ENCODE measurements at regions of chr11 and their contacts with region 1.

Region 1: DNA sequence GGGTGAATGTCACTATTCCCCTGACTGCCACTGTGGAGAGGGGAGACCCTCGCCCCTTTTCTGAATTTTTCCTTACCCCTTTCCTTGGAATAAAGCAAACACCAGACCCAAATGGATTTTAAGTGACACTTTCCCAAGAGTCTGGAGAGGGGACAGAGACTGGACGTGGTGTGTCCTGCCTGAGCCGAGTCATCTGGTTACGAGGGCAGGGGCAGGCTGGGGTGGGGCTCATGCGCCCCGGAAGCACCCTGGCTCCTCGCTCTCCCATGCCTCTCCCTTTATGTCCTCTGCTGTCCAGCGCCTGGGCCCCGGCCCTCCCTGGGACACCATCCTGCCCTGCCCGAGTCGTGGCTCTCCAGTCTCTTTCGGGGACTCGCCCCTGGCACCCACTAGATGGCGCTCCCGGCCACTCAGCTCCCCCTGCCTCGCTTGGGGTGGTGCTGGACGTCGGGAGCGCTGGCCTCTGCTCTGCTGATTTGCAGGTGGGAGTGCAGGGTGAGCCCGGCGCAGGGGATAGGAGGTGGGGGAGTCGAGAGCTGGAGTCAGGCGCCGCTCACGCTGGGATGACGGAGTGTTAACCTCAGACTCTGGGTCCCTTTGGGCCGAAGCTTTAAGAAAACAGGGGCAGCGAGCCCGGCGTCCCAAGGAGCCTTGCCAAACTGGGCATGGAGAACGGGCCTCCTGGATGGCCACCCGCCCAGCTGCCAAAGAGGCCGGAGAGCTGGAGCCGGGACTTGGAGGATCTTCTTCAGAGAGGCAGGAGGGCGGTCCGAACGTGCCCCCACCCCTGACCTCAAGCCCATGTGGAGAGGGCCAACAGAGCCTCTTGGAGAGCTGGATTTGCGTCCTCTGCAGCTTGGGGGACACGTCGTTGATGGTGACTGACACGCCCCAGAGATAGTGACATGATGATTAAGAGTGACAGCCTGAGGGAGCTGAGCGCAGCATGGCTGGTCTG is 89.9 kb downstream of the RPS6KA4 start:
- DNase-seq: peak; percentile 82
- ATAC-seq: peak; percentile 80
- H3K4me3 Mint-ChIP-seq: peak overlapping the region; percentile 61
- H3K27ac Mint-ChIP-seq: no peak overlapping the region
- H3K4me1 Mint-ChIP-seq: peaks cover 9% of the 10 kb centered on the region
- H3K27me3 Mint-ChIP-seq: peaks cover 7% of the 10 kb centered on the region
- CTCF ChIP-seq: peak; percentile 81

Region 2: DNA sequence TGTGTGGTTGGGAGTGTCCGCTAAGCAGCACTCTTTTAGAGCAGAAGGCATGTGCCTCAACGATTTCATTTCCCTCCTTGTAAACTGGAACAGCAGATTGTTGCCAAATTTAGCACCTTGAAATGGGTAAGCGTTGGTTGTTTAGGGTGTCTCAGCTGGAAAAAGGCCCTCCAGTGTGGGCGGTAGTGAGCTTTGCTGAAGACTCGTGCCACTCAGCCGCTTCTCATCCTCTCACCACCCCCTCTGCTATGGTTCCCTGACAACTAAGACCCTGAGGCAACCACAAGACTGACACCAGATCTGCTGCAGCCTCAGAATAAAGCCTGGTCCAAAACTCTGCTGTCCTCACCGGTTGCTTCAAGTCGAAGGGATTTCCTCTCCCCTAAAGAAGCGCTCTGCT is 252.3 kb before region 1 on chr11:
- CTCF ChIA-PET with region 1: no interaction called
- POLR2A ChIA-PET with region 1: no interaction called
- intact Hi-C with region 1: no loop called
- DNase-seq: no peak
- ATAC-seq: no peak
- H3K4me3 Mint-ChIP-seq: no peak overlapping the region
- H3K27ac Mint-ChIP-seq: peak overlapping the region; percentile 40
- H3K4me1 Mint-ChIP-seq: peaks cover 21% of the 10 kb centered on the region
- H3K27me3 Mint-ChIP-seq: no peaks in the 10 kb centered on the region
- CTCF ChIP-seq: no peak

Region 3: GRCh38 chr11:64269380-64270234 is 179.3 kb before region 1 on chr11:
- CTCF ChIA-PET with region 1: no interaction called
- POLR2A ChIA-PET with region 1: no interaction called
- intact Hi-C with region 1: no loop called
- DNase-seq: peak; percentile 98
- ATAC-seq: peak; percentile 73
- H3K4me3 Mint-ChIP-seq: peak overlapping the region; percentile 96
- H3K27ac Mint-ChIP-seq: peak overlapping the region; percentile 95
- H3K4me1 Mint-ChIP-seq: peaks cover 21% of the 10 kb centered on the region
- H3K27me3 Mint-ChIP-seq: no peaks in the 10 kb centered on the region
- CTCF ChIP-seq: no peak

Region 4: GRCh38 chr11:64390558-64390957 is 58.3 kb before region 1 on chr11:
- CTCF ChIA-PET with region 1: interaction called, 16 read pairs
- POLR2A ChIA-PET with region 1: no interaction called
- intact Hi-C with region 1: no loop called
- DNase-seq: no peak
- ATAC-seq: peak; percentile 11
- H3K4me3 Mint-ChIP-seq: no peak overlapping the region
- H3K27ac Mint-ChIP-seq: no peak overlapping the region
- H3K4me1 Mint-ChIP-seq: peaks cover 33% of the 10 kb centered on the region
- H3K27me3 Mint-ChIP-seq: no peaks in the 10 kb centered on the region
- CTCF ChIP-seq: no peak

Region 5: DNA sequence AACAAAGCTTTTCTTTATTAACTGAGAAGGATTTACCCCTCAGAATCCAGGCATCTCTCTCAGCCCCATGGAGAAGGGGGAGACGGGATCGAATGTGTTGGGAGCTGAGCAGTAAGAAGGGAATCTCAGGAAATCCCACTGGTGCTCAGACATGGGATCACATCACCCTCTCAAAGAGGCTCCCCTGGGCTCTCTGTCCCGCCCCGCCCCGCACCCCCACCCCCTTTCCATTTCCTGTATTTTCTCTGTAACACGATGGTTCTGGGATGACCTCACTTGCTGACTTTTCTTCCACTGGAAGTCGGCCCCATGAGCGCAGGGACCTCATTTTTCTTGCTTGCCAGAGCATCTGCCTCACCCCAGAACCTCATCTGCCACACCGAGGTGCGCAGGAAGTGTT is 10.1 kb after region 1 on chr11:
- CTCF ChIA-PET with region 1: interaction called, 25 read pairs
- POLR2A ChIA-PET with region 1: interaction called, 4 read pairs
- intact Hi-C with region 1: no loop called
- DNase-seq: no peak
- ATAC-seq: no peak
- H3K4me3 Mint-ChIP-seq: no peak overlapping the region
- H3K27ac Mint-ChIP-seq: no peak overlapping the region
- H3K4me1 Mint-ChIP-seq: no peaks in the 10 kb centered on the region
- H3K27me3 Mint-ChIP-seq: no peaks in the 10 kb centered on the region
- CTCF ChIP-seq: no peak

Region 6: GRCh38 chr11:64605244-64605560 is 156.3 kb after region 1 on chr11:
- CTCF ChIA-PET with region 1: interaction called, 10 read pairs
- POLR2A ChIA-PET with region 1: no interaction called
- intact Hi-C with region 1: no loop called
- DNase-seq: no peak
- ATAC-seq: no peak
- H3K4me3 Mint-ChIP-seq: no peak overlapping the region
- H3K27ac Mint-ChIP-seq: no peak overlapping the region
- H3K4me1 Mint-ChIP-seq: peaks cover 2% of the 10 kb centered on the region
- H3K27me3 Mint-ChIP-seq: no peaks in the 10 kb centered on the region
- CTCF ChIP-seq: no peak

Region 7: GRCh38 chr11:64652586-64653387 is 203.9 kb after region 1 on chr11:
- CTCF ChIA-PET with region 1: interaction called, 45 read pairs
- POLR2A ChIA-PET with region 1: no interaction called
- intact Hi-C with region 1: loop called (anchors 5 kb)
- DNase-seq: peak; percentile 85
- ATAC-seq: peak; percentile 91
- H3K4me3 Mint-ChIP-seq: no peak overlapping the region
- H3K27ac Mint-ChIP-seq: no peak overlapping the region
- H3K4me1 Mint-ChIP-seq: no peaks in the 10 kb centered on the region
- H3K27me3 Mint-ChIP-seq: peaks cover 3% of the 10 kb centered on the region
- CTCF ChIP-seq: peak; percentile 80

Measured in activated CD8-positive, alpha-beta T cell treated with anti-CD3 and anti-CD28 coated beads for 36 hours (primary cell).